Transverse colon (tissue), 4 donors: ENCODE measurements at regions of chr2 and their contacts with region 1.

Region 1: GRCh38 chr2:62783679-62784078 is 78.2 kb downstream of the EHBP1 start:
- DNase-seq: no peak
- H3K4me3 ChIP-seq: no peak overlapping the region
- H3K27ac ChIP-seq: no peak overlapping the region
- H3K4me1 ChIP-seq: peaks cover 0 to 7% (median 0%) of the 10 kb centered on the region in 4 donors
- H3K27me3 ChIP-seq: no peaks in the 10 kb centered on the region
- CTCF ChIP-seq: no peak
- EP300 ChIP-seq: no peak
- POLR2A ChIP-seq: no peak

Region 2: GRCh38 chr2:62456721-62457539 is 326.7 kb before region 1 on chr2:
- in situ Hi-C with region 1: loop called (anchors 5 kb)
- intact Hi-C with region 1: loop called (anchors 5 kb)
- DNase-seq: peak; percentile 70
- H3K4me3 ChIP-seq: peak overlapping the region; percentile 47 to 64 (median 54)
- H3K27ac ChIP-seq: peak overlapping the region; percentile 70 to 82 (median 76)
- H3K4me1 ChIP-seq: peaks cover 4 to 14% (median 8%) of the 10 kb centered on the region in 4 donors
- H3K27me3 ChIP-seq: no peaks in the 10 kb centered on the region
- CTCF ChIP-seq: peak; percentile 98 to 99 (median 99)
- EP300 ChIP-seq: no peak
- POLR2A ChIP-seq: no peak